ENCODE measurements at regions of chr1 and their contacts with region 1.

Region 1: GRCh38 chr1:203702130-203702577 is 62.8 kb upstream of the LAX1 start:
- DNase-seq: peak; percentile 33 to 76 (median 64)
- H3K4me3 ChIP-seq: no peak overlapping the region
- H3K27ac ChIP-seq: no peak overlapping the region
- H3K4me1 ChIP-seq: peaks cover 2% of the 10 kb centered on the region
- H3K27me3 ChIP-seq: no peaks in the 10 kb centered on the region
- CTCF ChIP-seq: peak; percentile 55 to 96 (median 93)
- EP300 ChIP-seq: no peak
- POLR2A ChIP-seq: no peak

Region 2: GRCh38 chr1:203267347-203267846 is 434.8 kb before region 1 on chr1:
- intact Hi-C with region 1: loop called in 3 of 4 experiments (anchors 10 kb)
- DNase-seq: peak; percentile 83 to 89 (median 87)
- H3K4me3 ChIP-seq: peak overlapping the region; percentile 56
- H3K27ac ChIP-seq: peak overlapping the region; percentile 68 to 82
- H3K4me1 ChIP-seq: peaks cover 3% of the 10 kb centered on the region
- H3K27me3 ChIP-seq: no peaks in the 10 kb centered on the region
- CTCF ChIP-seq: peak; percentile 86 to 91 (median 87)
- EP300 ChIP-seq: no peak
- POLR2A ChIP-seq: no peak

Region 3: DNA sequence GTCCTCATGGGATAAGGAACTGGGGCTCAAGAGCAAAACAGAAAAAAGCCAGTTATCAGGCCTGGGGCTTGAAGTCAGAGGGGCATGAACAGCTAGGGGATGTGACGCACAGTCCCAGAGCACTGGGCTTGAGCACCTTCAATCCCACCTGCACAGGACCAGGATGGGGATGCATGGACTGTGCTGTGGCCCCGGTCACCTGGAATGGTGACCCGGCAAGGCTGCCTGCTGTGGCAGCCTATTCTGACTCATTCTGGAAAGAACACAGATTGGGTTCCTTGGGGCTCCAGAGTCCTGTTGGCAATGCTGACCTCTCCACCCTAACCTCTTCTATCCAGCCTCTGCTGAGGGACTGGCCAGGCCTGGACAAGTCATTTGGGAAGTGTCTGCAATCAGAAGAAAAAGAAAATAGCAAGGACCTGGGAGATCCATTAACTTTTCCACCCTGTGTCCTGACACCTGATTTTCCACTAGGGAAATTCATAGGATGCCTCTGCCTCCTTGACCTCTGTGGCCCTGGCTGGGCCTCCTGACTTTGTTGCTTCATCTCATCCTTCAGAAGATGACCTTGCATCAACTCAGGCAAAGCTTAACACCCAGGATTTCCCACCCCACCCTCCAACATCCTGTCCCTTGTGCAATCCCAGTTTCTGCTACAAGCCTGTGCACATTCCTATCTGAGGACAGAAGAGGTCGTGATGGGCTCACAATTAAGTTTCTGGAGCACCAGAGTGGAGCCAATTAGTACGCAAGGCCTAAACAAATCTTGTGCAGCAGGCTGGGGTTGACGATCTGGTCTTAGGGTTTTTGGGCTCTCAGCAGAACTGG is 333.3 kb before region 1 on chr1:
- intact Hi-C with region 1: loop called in 1 of 4 experiments (anchors 5 kb)
- DNase-seq: peak; percentile 65 to 91 (median 78)
- H3K4me3 ChIP-seq: no peak overlapping the region
- H3K27ac ChIP-seq: peak overlapping the region; percentile 50 to 71
- H3K4me1 ChIP-seq: peaks cover 8% of the 10 kb centered on the region
- H3K27me3 ChIP-seq: no peaks in the 10 kb centered on the region
- CTCF ChIP-seq: peak; percentile 17 to 90 (median 89)
- EP300 ChIP-seq: peak; percentile 69
- POLR2A ChIP-seq: peak; percentile 27

Region 4: GRCh38 chr1:203504397-203505250 is 197.5 kb before region 1 on chr1:
- intact Hi-C with region 1: loop called (anchors 2 to 5 kb)
- DNase-seq: peak; percentile 77 to 89 (median 86)
- H3K4me3 ChIP-seq: no peak overlapping the region
- H3K27ac ChIP-seq: no peak overlapping the region
- H3K4me1 ChIP-seq: peaks cover 12% of the 10 kb centered on the region
- H3K27me3 ChIP-seq: no peaks in the 10 kb centered on the region
- CTCF ChIP-seq: peak; percentile 68 to 90 (median 86)
- EP300 ChIP-seq: no peak
- POLR2A ChIP-seq: no peak

Region 5: DNA sequence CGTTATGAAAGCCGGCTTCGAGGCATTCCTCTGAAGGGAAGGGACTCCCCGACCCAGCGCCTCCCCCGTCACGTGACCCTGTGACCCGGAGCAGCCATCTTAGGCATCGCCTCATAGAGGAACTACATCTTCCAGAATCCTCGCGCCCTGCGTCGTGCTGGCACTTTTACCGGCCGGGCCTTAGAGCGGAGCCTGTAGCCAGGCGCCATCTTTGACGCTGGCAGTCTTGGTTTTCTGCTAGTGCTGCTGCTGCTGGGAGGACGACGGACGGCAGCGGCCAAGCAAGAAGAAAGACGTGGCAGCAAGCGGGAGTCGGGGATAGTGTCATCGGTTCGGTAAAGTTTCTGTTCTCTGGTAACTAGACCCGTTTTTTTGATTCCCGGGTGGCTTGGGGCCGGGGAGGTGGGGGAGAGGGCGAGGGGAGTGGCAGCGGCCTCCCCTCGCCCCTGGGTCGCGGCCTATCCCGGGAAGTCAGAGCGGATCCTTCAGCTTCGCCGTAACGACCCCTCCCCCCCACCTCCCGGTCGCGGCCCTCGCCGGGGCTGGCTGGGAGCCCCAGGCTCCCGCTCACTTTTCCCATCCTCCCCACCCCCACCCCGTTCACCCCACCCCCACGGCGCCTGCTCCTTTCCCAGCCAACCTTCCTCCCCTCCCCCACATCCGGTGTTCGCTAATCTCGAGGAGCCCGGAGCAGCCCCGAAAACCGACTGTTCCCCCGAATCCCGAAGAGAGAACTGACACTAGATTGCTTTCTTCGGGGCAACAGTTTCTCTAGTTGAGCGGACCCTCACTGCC is 93.5 kb after region 1 on chr1 and contains the starts of genes ZBED6 and ZC3H11A:
- intact Hi-C with region 1: no loop called
- DNase-seq: peak; percentile 98 to 100 (median 99)
- H3K4me3 ChIP-seq: peak within 1 kb of the TSS; percentile 88
- H3K27ac ChIP-seq: peak within 1 kb of the TSS; percentile 79 to 92
- H3K4me1 ChIP-seq: peaks cover 17% of the 10 kb centered on the region
- H3K27me3 ChIP-seq: no peaks in the 10 kb centered on the region
- CTCF ChIP-seq: no peak
- EP300 ChIP-seq: no peak
- POLR2A ChIP-seq: peak; percentile 78
- total RNA-seq, gene ZBED6: 19.9 to 39.1 (median 32.7) TPM
- total RNA-seq, gene ZC3H11A: 59.2 to 100 (median 63.2) TPM

Region 6: DNA sequence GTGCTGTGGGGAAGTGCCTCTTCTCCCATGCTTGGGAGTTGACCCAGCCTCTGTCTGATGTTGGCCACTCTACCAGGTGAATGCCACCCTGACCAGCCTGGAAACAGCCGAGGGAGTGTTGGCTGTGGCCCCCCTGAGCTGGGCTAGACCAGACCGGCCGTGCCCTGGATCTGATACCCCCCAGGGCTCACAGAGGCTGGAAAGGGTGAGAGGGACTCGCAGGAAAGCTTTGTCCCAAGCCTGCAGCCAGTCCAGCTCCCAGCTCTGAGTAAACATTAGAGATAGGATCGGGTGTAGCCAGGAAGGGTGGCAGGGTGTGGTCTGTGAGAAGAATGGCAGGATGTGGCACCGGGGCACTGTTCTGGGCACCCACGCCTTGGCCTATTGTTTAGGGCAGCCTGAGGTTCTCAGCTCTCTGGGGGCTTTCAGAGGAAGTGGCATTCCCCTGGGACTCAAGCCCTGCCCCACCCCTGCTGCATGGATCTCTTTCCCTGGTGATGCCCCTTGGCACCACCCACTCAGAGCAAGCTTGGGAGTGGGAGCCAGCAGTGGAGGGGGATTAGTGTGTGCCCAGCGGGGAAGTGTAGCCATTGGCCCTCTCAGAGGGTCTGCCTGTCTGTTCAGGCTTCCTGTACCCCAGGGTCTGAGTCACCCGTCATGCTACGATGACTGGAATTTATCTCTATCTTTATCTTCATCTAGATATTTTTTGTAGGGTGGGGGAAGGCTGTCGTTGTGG is 402.1 kb after region 1 on chr1:
- intact Hi-C with region 1: no loop called
- DNase-seq: no peak
- H3K4me3 ChIP-seq: no peak overlapping the region
- H3K27ac ChIP-seq: no peak overlapping the region
- H3K4me1 ChIP-seq: peaks cover 9% of the 10 kb centered on the region
- H3K27me3 ChIP-seq: no peaks in the 10 kb centered on the region
- CTCF ChIP-seq: no peak
- EP300 ChIP-seq: no peak
- POLR2A ChIP-seq: no peak

Region 7: DNA sequence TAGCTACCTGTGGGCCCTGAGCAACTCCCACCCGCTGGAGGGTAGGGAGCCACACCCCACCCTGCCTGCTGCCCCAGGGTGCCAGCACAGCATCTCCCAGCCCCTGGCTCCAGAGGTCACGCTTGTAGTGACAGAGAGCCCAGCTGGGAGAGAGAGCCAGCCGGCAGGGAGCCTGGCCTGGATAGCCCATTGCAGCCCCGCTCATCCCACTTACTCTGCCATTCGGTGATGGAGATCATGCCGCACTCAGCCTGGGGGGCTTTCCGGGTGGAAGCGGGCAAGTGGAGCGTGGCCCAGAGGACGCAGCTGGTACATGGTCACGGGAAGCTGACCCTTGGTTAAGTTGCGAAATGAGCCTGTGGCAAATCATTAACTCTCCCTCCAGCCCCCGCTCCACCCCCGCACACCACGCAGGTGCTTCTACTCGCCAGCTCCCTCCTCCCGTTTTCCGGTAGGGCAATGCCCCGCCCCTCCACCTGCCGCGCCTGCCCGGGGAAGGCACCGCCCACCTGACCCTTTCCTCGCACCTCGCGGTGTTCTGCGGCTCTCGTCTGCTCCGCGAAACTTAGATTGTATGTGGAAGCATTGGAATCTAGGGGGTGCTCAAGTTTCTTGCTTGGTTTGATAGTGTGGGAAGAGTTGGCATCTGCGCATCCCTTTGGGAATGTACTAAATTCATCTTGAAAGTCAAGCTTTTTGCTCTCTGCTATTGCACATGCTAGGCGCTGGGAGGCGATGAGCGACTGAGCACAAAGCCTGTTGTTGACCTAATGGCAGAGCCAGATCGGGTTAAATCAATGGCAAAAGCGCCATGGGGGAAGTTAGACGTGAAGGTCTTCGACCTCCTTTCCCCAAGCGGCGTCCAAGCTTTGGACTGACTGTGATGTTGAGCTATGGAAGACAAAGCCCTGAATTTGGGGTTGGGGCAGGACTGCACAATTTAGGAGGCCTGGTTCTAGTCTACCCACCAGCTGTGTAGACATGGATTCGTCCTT is 511.8 kb after region 1 on chr1 and contains the start of gene GOLT1A:
- intact Hi-C with region 1: loop called in 1 of 4 experiments (anchors 10 kb)
- DNase-seq: peak; percentile 50 to 71 (median 58)
- H3K4me3 ChIP-seq: peak within 1 kb of the TSS; percentile 12
- H3K27ac ChIP-seq: no peak within 1 kb of the TSS
- H3K4me1 ChIP-seq: no peaks in the 10 kb centered on the region
- H3K27me3 ChIP-seq: no peaks in the 10 kb centered on the region
- CTCF ChIP-seq: peak in 2 of 3 donors; percentile 63 to 70
- EP300 ChIP-seq: no peak
- POLR2A ChIP-seq: no peak
- total RNA-seq, gene GOLT1A: 0.27 to 3.9 (median 0.41) TPM in 3 of 7 donors, not detected in the others

Measured in ovary (tissue), 10 donors.